ENCODE measurements at regions of chr6 and their contacts with region 1.

Region 1: GRCh38 chr6:132279592-132280139 is 121.6 kb downstream of the MOXD1 start:
- DNase-seq: peak; percentile 64
- ATAC-seq: peak; percentile 94
- H3K4me3 ChIP-seq: peak overlapping the region; percentile 74
- H3K27ac ChIP-seq: no peak overlapping the region
- H3K4me1 ChIP-seq: no peaks in the 10 kb centered on the region
- H3K27me3 ChIP-seq: peaks cover 0 to 3% of the 10 kb centered on the region in 2 experiments; a peak in 2 of 4 replicates
- CTCF ChIP-seq: peak; percentile 61 to 94 (median 63)
- EP300 ChIP-seq: no peak
- POLR2A ChIP-seq: no peak
- RAD21 ChIP-seq: peak; percentile 84

Region 2: DNA sequence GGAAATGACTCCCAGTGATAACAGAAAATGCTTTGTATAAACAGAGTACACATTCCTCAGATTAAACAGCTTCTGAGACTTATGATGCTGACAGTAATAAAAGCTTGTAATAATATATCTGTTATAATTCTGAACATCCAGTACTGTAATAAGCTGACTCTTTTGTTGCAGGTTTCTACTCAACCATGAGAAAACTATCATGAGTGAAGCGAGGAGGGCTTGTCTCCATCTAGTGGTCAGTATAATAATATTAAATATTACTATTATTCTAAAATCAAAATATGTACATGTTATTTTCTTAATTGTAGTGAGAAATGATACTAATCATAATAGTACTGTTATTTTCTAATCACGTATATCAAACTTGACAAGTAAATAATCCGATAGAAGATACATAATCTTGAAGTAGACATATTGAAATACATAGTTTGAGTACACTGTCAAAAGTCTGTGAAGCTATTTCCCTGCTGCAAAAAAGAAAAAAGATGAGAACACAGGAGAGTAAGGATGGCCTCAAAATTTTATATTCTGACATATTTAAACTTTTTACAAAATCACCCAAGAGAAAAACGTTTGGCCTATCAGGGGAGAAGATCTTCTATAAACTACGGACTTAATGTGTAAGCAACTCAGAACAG is 61.5 kb before region 1 on chr6:
- CTCF ChIA-PET with region 1: no interaction called
- POLR2A ChIA-PET with region 1: no interaction called
- RAD21 ChIA-PET with region 1: no interaction called
- SMC1A ChIA-PET with region 1: no interaction called
- in situ Hi-C with region 1: no loop called
- intact Hi-C with region 1: no loop called
- DNase-seq: no peak
- ATAC-seq: peak; percentile 46; the same call in 1 of the 3 replicates
- H3K4me3 ChIP-seq: no peak overlapping the region
- H3K27ac ChIP-seq: no peak overlapping the region
- H3K4me1 ChIP-seq: no peaks in the 10 kb centered on the region
- H3K27me3 ChIP-seq: no peaks in the 10 kb centered on the region
- CTCF ChIP-seq: peak; percentile 12 to 33 (median 20); a peak in 4 of 6 replicates
- EP300 ChIP-seq: no peak
- POLR2A ChIP-seq: no peak
- RAD21 ChIP-seq: peak; percentile 52

Region 3: GRCh38 chr6:132261354-132261753 is 18.3 kb before region 1 on chr6:
- CTCF ChIA-PET with region 1: interaction called, 103 read pairs
- POLR2A ChIA-PET with region 1: no interaction called
- RAD21 ChIA-PET with region 1: interaction called, 3 read pairs
- SMC1A ChIA-PET with region 1: interaction called, 41 read pairs
- in situ Hi-C with region 1: no loop called
- intact Hi-C with region 1: no loop called
- DNase-seq: no peak
- ATAC-seq: no peak
- H3K4me3 ChIP-seq: no peak overlapping the region
- H3K27ac ChIP-seq: no peak overlapping the region
- H3K4me1 ChIP-seq: no peaks in the 10 kb centered on the region
- H3K27me3 ChIP-seq: no peaks in the 10 kb centered on the region; a peak in 1 of 4 replicates
- CTCF ChIP-seq: no peak
- EP300 ChIP-seq: no peak
- POLR2A ChIP-seq: no peak
- RAD21 ChIP-seq: no peak

Region 4: DNA sequence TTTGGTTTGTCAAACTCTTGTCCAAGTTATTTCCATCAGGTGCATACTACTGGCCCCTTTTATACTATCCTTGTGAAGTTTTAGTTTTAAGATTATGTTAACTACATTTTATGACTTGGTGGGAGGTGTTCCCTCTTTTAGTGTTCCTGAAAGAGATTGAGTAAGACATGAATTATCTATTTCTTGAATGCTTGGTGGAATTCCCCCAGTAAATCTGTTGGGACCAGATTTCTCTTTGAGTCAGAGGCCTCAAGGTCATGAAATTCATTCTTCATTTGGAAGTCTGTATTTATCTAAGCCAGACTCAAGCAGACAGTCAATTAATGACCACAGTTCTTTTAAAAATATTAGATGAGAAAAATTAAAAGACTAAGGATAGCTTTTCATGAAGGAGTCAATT is 40.3 kb after region 1 on chr6:
- CTCF ChIA-PET with region 1: interaction called, 12 read pairs
- POLR2A ChIA-PET with region 1: no interaction called
- RAD21 ChIA-PET with region 1: interaction called, 3 read pairs
- SMC1A ChIA-PET with region 1: interaction called, 3 read pairs
- in situ Hi-C with region 1: no loop called
- intact Hi-C with region 1: no loop called
- DNase-seq: no peak
- ATAC-seq: no peak
- H3K4me3 ChIP-seq: no peak overlapping the region
- H3K27ac ChIP-seq: no peak overlapping the region
- H3K4me1 ChIP-seq: no peaks in the 10 kb centered on the region
- H3K27me3 ChIP-seq: no peaks in the 10 kb centered on the region
- CTCF ChIP-seq: no peak
- EP300 ChIP-seq: no peak
- POLR2A ChIP-seq: no peak
- RAD21 ChIP-seq: no peak

Region 5: DNA sequence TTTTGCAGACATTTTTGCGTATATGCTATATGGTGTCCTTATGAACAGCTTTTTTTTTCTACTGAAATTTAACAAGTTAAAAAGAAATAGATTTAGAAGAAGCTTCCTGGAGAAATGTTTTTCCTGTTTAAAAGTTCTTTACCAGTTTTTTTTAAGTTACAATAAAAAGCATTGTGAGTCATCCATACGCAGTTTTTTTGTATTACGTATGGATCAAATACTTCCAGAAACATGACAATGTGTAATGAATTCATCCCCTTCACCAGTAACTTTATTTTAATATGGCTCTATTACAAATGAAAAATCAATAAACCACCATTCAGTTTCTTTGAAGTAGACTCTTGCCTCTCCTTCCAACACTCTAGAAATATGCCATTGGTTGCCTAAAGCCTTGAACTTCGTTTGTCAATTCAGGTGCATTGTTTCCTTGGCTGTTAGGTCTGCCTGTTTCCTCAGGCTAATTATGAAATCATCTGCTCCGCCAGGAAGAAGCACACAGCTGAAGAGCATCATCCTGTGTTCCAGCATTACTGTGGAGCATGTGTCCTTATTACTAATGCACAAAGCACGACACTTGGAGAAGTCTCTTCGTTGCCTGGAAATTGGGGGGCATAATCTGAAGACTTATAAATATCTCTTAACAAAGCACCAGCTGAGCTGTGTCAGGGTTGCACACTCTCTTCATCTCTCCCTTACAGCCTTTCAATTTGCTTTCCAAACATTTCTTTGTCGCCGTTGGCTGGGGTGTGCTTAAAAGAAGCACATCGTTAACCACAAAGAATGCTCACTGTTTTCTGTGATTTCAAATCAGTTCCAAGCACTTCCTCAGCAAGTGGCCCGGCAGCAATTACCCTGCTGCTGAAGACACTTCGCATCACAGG is 112.0 kb after region 1 on chr6:
- CTCF ChIA-PET with region 1: interaction called, 11 read pairs
- POLR2A ChIA-PET with region 1: no interaction called
- RAD21 ChIA-PET with region 1: interaction called, 6 read pairs
- SMC1A ChIA-PET with region 1: interaction called, 18 read pairs
- in situ Hi-C with region 1: no loop called
- intact Hi-C with region 1: no loop called
- DNase-seq: no peak
- ATAC-seq: no peak
- H3K4me3 ChIP-seq: no peak overlapping the region
- H3K27ac ChIP-seq: no peak overlapping the region
- H3K4me1 ChIP-seq: no peaks in the 10 kb centered on the region
- H3K27me3 ChIP-seq: no peaks in the 10 kb centered on the region
- CTCF ChIP-seq: no peak
- EP300 ChIP-seq: no peak
- POLR2A ChIP-seq: no peak
- RAD21 ChIP-seq: no peak

Region 6: DNA sequence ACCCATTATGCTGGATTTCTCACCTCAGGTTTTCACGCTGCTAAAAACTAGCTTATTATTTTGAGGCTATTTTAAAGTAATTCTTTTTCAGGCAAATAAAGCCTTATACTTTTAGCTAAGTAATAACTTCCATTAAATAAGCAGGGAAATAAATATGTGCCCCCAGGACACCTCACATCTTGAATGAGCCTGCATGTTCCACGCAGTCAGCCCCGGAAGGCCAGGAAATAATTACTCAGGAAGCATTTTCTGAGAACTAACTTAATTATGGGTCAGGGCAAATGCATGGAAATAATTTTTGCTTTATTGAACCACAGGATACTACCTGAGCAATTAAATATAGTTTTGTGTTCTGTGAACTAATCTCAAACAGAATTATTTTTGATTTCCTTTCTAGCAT is 192.1 kb after region 1 on chr6:
- CTCF ChIA-PET with region 1: interaction called, 13 read pairs
- POLR2A ChIA-PET with region 1: no interaction called
- RAD21 ChIA-PET with region 1: no interaction called
- SMC1A ChIA-PET with region 1: interaction called, 8 read pairs
- in situ Hi-C with region 1: no loop called
- intact Hi-C with region 1: no loop called
- DNase-seq: no peak
- ATAC-seq: no peak
- H3K4me3 ChIP-seq: no peak overlapping the region
- H3K27ac ChIP-seq: no peak overlapping the region
- H3K4me1 ChIP-seq: peaks cover 4% of the 10 kb centered on the region; the same call in 1 of the 2 replicates
- H3K27me3 ChIP-seq: no peaks in the 10 kb centered on the region
- CTCF ChIP-seq: no peak
- EP300 ChIP-seq: no peak
- POLR2A ChIP-seq: no peak
- RAD21 ChIP-seq: no peak

Region 7: GRCh38 chr6:132498638-132499037 is 219.0 kb after region 1 on chr6:
- CTCF ChIA-PET with region 1: interaction called, 28 read pairs
- POLR2A ChIA-PET with region 1: no interaction called
- RAD21 ChIA-PET with region 1: interaction called, 4 read pairs
- SMC1A ChIA-PET with region 1: interaction called, 19 read pairs
- in situ Hi-C with region 1: no loop called
- intact Hi-C with region 1: no loop called
- DNase-seq: peak; percentile 60
- ATAC-seq: peak; percentile 75
- H3K4me3 ChIP-seq: peak overlapping the region; percentile 22; the same call in 1 of the 2 replicates
- H3K27ac ChIP-seq: peak overlapping the region; percentile 76
- H3K4me1 ChIP-seq: peaks cover 53% of the 10 kb centered on the region
- H3K27me3 ChIP-seq: no peaks in the 10 kb centered on the region
- CTCF ChIP-seq: no peak
- EP300 ChIP-seq: peak; percentile 87 to 97
- POLR2A ChIP-seq: no peak
- RAD21 ChIP-seq: no peak

Region 8: GRCh38 chr6:132548746-132549463 is 269.2 kb after region 1 on chr6:
- CTCF ChIA-PET with region 1: interaction called, 22 read pairs
- POLR2A ChIA-PET with region 1: no interaction called
- RAD21 ChIA-PET with region 1: no interaction called
- SMC1A ChIA-PET with region 1: no interaction called
- in situ Hi-C with region 1: no loop called
- intact Hi-C with region 1: no loop called
- DNase-seq: no peak
- ATAC-seq: no peak
- H3K4me3 ChIP-seq: no peak overlapping the region
- H3K27ac ChIP-seq: no peak overlapping the region
- H3K4me1 ChIP-seq: no peaks in the 10 kb centered on the region
- H3K27me3 ChIP-seq: peaks cover 0 to 2% of the 10 kb centered on the region in 2 experiments; a peak in 3 of 4 replicates
- CTCF ChIP-seq: no peak
- EP300 ChIP-seq: no peak
- POLR2A ChIP-seq: no peak
- RAD21 ChIP-seq: no peak

Measured in GM12878 (cell line).